Activated T-helper 2 cell treated with anti-CD3 and anti-CD28 coated beads, Interferon-gamma antibody, Interleukin-2, Interleukin-4, amounts not matched to agents 10 μg/mL and 5 μg/mL and 100 μg/mL, durations not matched to agents 14 hours and 24 hours and 36 hours (primary cell): ENCODE measurements at regions of chr3 and their contacts with region 1.

Region 1: GRCh38 chr3:172530566-172530965 is 7.3 kb upstream of the TNFSF10 start:
- DNase-seq: peak; percentile 50
- H3K4me3 Mint-ChIP-seq: peak overlapping the region; percentile 22
- H3K27ac Mint-ChIP-seq: peak overlapping the region; percentile 78
- H3K4me1 Mint-ChIP-seq: peaks cover 46% of the 10 kb centered on the region
- H3K27me3 Mint-ChIP-seq: no peaks in the 10 kb centered on the region

Region 2: DNA sequence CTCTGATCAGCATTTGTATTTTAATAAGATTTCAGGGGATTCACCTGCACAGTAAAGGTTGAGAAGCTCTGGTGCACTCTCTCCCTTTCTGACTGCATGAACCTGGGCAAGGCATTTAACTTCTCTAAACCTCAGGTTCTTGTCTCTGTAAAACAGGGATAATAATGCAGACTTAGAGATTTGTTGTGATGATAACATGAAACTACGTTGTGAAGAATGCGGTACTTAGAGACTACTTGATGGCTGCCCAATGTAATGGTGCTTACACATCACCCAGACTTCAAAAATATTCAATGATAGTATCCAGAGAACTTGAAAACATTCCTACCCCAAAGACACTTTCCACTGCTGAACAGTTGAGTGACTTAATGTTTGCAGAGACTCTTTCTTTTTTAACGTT is 12.4 kb after region 1 on chr3:
- intact Hi-C with region 1: no loop called
- DNase-seq: no peak
- H3K4me3 Mint-ChIP-seq: no peak overlapping the region
- H3K27ac Mint-ChIP-seq: no peak overlapping the region
- H3K4me1 Mint-ChIP-seq: peaks cover 39% of the 10 kb centered on the region
- H3K27me3 Mint-ChIP-seq: no peaks in the 10 kb centered on the region

Region 3: GRCh38 chr3:172562871-172563863 is 32.6 kb after region 1 on chr3:
- intact Hi-C with region 1: loop called (anchors 1 kb)
- DNase-seq: peak; percentile 32
- H3K4me3 Mint-ChIP-seq: peak overlapping the region; percentile 40
- H3K27ac Mint-ChIP-seq: peak overlapping the region; percentile 89
- H3K4me1 Mint-ChIP-seq: peaks cover 47% of the 10 kb centered on the region
- H3K27me3 Mint-ChIP-seq: no peaks in the 10 kb centered on the region

Region 4: GRCh38 chr3:172580680-172581401 is 50.3 kb after region 1 on chr3:
- intact Hi-C with region 1: loop called (anchors 1 kb)
- DNase-seq: no peak
- H3K4me3 Mint-ChIP-seq: peak overlapping the region; percentile 49
- H3K27ac Mint-ChIP-seq: peak overlapping the region; percentile 82
- H3K4me1 Mint-ChIP-seq: peaks cover 91% of the 10 kb centered on the region
- H3K27me3 Mint-ChIP-seq: no peaks in the 10 kb centered on the region